HCT116 (cell line): ENCODE measurements at regions of chr14 and their contacts with region 1.

Region 1: DNA sequence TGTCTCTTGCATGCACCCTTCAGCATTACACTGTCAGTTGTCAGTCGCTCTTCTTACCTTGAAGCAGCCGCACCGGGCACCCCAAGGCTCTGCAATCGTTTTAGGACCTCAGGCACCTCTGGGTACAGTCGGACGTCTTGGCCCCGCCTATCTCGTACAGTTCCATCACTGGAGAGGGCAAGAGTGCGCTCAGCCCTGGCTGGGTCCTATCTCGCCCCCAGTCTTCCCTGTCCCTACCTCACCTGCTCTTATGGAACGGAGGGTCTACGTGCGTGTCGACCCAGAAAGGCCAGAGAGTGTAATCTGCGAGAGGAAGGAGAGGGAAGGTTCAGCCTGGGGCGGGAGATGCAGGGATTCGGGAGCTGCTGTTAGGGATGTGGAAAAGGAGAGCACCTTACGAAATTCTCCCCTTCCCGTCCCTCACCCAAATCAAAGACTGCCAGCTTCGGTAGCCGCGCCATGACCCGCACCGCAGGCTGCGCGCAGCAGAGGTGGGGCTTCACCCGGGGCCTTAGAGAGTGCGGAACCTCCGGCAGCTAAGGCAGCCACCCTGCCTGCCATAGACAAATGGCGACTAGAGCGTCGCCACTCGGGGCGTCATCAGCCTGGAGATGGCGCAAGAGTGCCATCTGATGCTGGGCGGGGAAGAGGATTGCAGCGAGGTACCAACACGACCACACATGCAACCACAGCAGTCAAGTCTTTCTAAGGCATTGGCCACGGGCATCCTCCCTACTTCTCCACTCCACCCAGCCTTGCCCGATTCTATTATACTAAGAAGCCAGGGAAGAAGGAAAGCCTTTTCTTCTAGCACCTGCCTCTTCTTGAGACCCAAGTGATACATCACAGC is at the start of gene MDP1:
- DNase-seq: peak; percentile 78
- ATAC-seq: peak; percentile 72
- H3K4me3 ChIP-seq: peak within 1 kb of the TSS; percentile 87 to 97
- H3K27ac ChIP-seq: peak within 1 kb of the TSS; percentile 88
- H3K4me1 ChIP-seq: peaks cover 22 to 29% of the 10 kb centered on the region in 2 experiments
- H3K27me3 ChIP-seq: no peaks in the 10 kb centered on the region
- CTCF ChIP-seq: peak; percentile 23 to 64 (median 40); a peak in 3 of 6 replicates
- POLR2A ChIP-seq: peak; percentile 75
- RAD21 ChIP-seq: peak; percentile 61
- total RNA-seq, gene MDP1: 15.9 TPM

Region 2: DNA sequence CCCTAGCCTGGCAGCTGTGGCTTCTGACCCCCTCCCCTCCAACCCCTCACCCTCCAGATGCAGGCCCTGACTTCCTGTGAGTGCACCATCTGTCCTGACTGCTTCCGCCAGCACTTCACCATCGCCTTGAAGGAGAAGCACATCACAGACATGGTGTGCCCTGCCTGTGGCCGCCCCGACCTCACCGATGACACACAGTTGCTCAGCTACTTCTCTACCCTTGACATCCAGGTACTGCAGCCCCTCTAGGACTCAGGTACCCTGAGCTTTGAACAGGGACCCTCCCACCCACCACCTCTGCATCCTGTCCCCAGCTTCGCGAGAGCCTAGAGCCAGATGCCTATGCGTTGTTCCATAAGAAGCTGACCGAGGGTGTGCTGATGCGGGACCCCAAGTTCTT is 60.6 kb before region 1 on chr14:
- CTCF ChIA-PET with region 1: no interaction called
- POLR2A ChIA-PET with region 1: no interaction called
- RAD21 ChIA-PET with region 1: no interaction called
- intact Hi-C with region 1: no loop called
- DNase-seq: no peak
- ATAC-seq: no peak
- H3K4me3 ChIP-seq: no peak overlapping the region
- H3K27ac ChIP-seq: no peak overlapping the region
- H3K4me1 ChIP-seq: peaks cover under 1% of the 10 kb centered on the region in 2 experiments; a peak in 2 of 4 replicates
- H3K27me3 ChIP-seq: no peaks in the 10 kb centered on the region
- CTCF ChIP-seq: no peak
- POLR2A ChIP-seq: no peak
- RAD21 ChIP-seq: no peak

Region 3: GRCh38 chr14:24232121-24232644 is 16.5 kb after region 1 on chr14 and contains the start of gene NEDD8:
- CTCF ChIA-PET with region 1: interaction called, 4 read pairs
- POLR2A ChIA-PET with region 1: interaction called, 3 read pairs
- RAD21 ChIA-PET with region 1: no interaction called
- intact Hi-C with region 1: loop called (anchors 2 kb)
- DNase-seq: peak; percentile 81
- ATAC-seq: peak; percentile 83
- H3K4me3 ChIP-seq: peak within 1 kb of the TSS; percentile 96 to 100
- H3K27ac ChIP-seq: peak within 1 kb of the TSS; percentile 94
- H3K4me1 ChIP-seq: peaks cover 14 to 22% of the 10 kb centered on the region in 2 experiments
- H3K27me3 ChIP-seq: no peaks in the 10 kb centered on the region
- CTCF ChIP-seq: no peak
- POLR2A ChIP-seq: peak; percentile 63
- RAD21 ChIP-seq: no peak
- total RNA-seq, gene NEDD8: 178 TPM

Region 4: DNA sequence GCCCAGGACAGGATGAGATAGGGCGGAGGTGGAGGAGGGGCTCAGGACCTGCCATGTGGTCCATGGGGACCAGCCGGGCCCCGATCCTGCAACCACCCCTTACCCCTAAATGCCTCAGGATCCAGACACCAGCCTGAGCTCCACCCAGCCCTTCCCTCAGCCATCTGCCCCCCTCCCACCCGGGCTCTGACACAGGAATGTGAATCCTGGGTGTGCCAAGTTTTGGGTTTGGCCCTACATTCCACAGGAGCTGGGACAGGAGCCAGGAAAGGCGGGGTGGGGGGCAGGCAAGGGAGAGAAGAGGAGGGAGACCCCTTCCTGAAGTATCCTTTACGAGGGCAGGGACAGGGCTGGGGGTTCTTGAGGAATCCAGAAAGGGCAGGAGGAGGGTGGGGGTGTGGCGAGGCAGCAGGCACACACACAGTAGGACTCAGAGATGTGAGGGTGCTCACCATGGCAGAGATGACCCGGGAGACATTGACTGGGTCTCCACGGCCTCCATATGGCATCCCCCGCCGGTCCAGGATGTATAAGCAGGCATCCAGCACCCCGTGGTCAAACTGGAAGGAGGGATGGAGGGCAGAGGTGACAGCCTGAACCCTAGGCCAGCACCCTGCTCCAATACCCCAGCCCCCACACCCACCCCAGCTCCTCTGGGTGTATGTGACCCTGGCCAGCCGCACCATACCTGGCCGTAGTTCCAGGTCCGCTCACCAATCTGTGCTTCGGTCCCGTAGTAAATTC is 43.7 kb after region 1 on chr14:
- CTCF ChIA-PET with region 1: no interaction called
- POLR2A ChIA-PET with region 1: no interaction called
- RAD21 ChIA-PET with region 1: no interaction called
- intact Hi-C with region 1: no loop called
- DNase-seq: no peak
- ATAC-seq: peak; percentile 55; the same call in 1 of the 2 replicates
- H3K4me3 ChIP-seq: no peak overlapping the region
- H3K27ac ChIP-seq: no peak overlapping the region
- H3K4me1 ChIP-seq: peaks cover 10 to 14% of the 10 kb centered on the region in 2 experiments
- H3K27me3 ChIP-seq: no peaks in the 10 kb centered on the region
- CTCF ChIP-seq: no peak
- POLR2A ChIP-seq: no peak
- RAD21 ChIP-seq: no peak